ENCODE measurements at regions of chr10 and their contacts with region 1.

Region 1: DNA sequence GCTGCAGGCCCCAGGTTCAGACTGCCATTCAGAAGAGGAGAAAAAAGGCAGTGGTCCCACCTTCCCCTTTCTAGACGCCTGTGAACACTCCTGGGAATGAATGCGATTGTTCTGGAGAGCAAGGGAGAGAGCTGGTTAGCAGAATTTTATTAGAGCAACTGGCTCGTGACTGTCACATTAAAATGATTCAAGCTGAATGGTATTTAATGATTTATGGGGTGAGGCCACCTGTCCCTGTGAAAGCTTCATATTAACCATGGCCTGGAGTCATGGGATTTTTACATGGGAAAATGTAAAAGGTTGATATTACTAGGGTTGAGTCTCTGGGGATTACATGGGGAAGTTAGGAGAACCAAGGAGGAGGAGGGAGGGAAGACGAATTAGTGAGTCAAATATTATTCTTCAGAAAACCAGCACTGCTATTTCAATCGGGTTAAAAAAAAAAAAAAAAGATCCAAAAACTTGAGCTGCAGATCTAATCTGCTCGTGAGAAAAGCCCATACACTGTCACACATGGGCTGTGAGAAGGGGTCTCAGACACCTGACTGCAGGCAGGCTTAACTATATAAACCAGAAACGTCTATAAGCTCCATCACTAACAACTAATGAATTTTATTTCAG is 8.3 kb downstream of the CXCL12 start:
- DNase-seq: no peak
- ATAC-seq: peak in 3 of 4 donors; percentile 21 to 63 (median 61)
- H3K4me3 ChIP-seq: no peak overlapping the region
- H3K27ac ChIP-seq: no peak overlapping the region
- H3K4me1 ChIP-seq: peaks cover 38% of the 10 kb centered on the region
- H3K27me3 ChIP-seq: no peaks in the 10 kb centered on the region
- CTCF ChIP-seq: no peak

Region 2: DNA sequence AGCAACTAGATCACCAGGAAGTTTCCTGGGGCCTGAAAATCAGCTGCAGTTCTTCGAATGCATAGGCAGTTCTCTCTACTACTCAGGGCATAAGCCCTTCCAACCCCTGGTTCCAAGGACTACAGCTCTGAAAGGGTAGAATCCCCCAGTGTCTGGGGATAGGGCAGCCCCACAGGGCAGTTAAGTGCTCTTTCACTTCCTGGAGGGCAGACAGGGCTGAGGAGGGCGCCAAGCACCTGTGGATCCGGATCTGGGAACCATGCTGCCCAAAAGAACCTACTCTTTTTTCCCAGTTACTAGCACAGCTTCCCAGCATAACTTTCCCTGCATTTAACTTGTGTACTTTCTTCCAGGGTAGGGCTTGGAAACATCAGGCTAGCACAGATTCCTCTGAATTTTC is 32.7 kb before region 1 on chr10:
- intact Hi-C with region 1: loop called in 1 of 2 experiments (anchors 5 kb)
- DNase-seq: no peak
- ATAC-seq: peak; percentile 43 to 73 (median 54)
- H3K4me3 ChIP-seq: no peak overlapping the region
- H3K27ac ChIP-seq: no peak overlapping the region
- H3K4me1 ChIP-seq: peaks cover 8% of the 10 kb centered on the region
- H3K27me3 ChIP-seq: no peaks in the 10 kb centered on the region
- CTCF ChIP-seq: peak; percentile 19

Measured in psoas muscle (tissue), 8 donors.